Naive thymus-derived CD4-positive, alpha-beta T cell (primary cell): ENCODE measurements at regions of chr4 and their contacts with region 1.

Region 1: DNA sequence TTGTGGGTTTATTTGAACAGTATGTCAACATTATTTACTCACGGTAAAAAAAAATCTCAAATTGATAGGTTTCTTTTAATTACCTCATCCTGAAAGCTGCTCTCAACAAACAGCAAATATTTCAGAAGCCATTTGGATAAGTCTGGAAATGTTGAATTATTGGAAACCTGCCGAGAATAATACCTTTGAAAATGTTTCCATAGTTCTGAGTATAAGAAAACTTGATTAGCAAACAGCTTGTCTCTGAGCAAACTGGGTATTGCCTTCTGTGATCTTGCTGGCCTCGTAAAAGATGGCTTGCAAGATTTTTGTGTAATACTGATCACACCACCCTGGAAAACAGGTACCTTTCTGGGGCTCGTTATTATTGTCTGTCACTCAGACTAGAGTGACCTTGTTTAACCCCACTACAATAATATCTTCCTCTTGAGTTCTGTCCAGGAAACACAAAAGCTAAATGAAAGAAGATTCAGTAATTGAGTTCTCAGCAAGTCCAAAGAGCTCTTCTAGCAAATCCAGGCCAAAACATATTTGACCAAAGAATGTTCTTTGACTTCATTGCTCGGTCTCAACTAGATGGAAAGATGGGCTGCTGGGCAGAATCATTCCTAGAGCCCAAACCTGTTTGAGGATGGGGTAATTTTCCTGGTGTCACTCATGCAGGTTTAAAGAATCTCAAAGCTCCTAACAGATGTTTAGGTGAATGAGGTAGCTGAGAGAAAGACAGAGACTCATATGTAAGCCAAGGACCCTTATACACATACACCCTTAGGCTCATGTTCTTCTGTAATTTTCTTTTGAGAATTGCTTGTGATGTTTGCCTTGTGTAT is 255.6 kb upstream of the JADE1 start:
- DNase-seq: peak in 1 of 9 donors; percentile 4
- ATAC-seq: no peak
- H3K4me3 ChIP-seq: no peak overlapping the region
- H3K4me3 Mint-ChIP-seq: peak overlapping the region; percentile 89 to 99 (median 94)
- H3K27ac ChIP-seq: no peak overlapping the region
- H3K27ac Mint-ChIP-seq: peak overlapping the region in 6 of 9 donors; percentile 1 to 92 (median 88)
- H3K4me1 ChIP-seq: peaks cover 0 to 4% of the 10 kb centered on the region in 2 donors
- H3K4me1 Mint-ChIP-seq: peaks cover 12 to 22% (median 17%) of the 10 kb centered on the region in 7 donors
- H3K27me3 ChIP-seq: peaks cover 0 to 3% of the 10 kb centered on the region in 2 donors
- H3K27me3 Mint-ChIP-seq: peaks cover 6 to 31% (median 7%) of the 10 kb centered on the region in 5 donors

Region 2: DNA sequence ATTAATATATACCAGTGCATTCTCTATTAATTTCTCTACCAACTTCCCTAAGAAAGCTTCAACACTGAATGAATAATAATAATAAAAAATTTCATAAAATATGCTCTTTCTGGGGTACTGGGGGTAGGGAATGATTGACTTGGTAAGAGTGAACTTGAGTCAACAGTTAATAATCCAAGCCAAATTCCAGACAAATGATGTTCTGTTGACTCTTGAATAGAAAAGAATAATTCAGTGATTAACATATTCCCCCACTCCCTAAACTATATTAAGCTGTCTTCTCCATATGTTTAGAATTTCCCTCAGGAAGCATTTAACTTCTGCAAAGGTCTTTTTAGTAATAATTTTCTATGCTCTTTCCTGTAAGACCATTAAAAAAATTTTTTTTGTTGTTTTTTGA is 278.6 kb before region 1 on chr4:
- CTCF ChIA-PET with region 1: no interaction called
- POLR2A ChIA-PET with region 1: no interaction called
- intact Hi-C with region 1: no loop called
- DNase-seq: no peak
- ATAC-seq: no peak
- H3K4me3 ChIP-seq: no peak overlapping the region
- H3K4me3 Mint-ChIP-seq: no peak overlapping the region
- H3K27ac ChIP-seq: no peak overlapping the region
- H3K27ac Mint-ChIP-seq: peak overlapping the region in 3 of 9 donors; percentile 27 to 51 (median 33)
- H3K4me1 ChIP-seq: no peaks in the 10 kb centered on the region
- H3K4me1 Mint-ChIP-seq: peaks cover 5 to 36% (median 13%) of the 10 kb centered on the region in 7 donors
- H3K27me3 ChIP-seq: no peaks in the 10 kb centered on the region
- H3K27me3 Mint-ChIP-seq: no peaks in the 10 kb centered on the region

Region 3: DNA sequence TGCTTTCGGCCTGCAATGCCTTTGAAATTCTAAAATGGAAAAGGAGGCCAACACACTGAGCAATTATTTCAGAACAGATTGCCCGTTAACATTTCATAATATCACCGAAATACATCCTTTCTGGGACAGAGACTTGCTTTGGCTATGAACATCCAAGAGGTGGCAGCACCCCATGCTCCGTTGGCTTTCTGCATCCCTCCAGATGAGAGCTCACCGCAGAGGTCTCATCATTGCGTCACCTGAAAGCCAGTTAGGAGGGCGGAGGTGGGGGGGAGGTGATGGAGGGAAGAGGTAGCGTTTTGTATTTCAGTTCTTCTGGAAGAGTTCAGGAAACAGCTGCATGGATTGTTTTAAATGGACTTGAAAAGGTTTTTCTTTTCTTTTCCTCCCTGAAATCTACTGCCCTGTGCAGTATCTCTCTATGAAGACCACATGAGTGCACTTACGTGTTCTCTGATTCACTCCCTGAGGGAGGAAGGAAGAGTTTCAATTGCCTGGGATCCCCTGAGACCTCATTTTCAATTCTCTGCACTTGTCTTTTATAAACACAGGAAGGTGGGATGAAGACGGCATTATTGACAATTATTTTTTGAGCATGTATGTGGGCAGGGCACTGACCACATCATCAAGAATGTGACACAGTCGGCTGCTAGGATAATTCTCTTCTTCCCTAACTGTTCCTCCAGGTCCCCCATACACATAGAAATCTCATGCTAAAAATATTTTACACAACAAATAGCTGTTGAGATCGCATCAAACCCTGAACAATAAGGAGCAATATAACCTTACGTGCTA is 99.4 kb before region 1 on chr4:
- CTCF ChIA-PET with region 1: no interaction called
- POLR2A ChIA-PET with region 1: no interaction called
- intact Hi-C with region 1: loop called (anchors 1 to 2 kb)
- DNase-seq: peak; percentile 16 to 68 (median 49)
- ATAC-seq: peak; percentile 92
- H3K4me3 ChIP-seq: no peak overlapping the region
- H3K4me3 Mint-ChIP-seq: no peak overlapping the region
- H3K27ac ChIP-seq: no peak overlapping the region
- H3K27ac Mint-ChIP-seq: peak overlapping the region in 1 of 9 donors; percentile 47
- H3K4me1 ChIP-seq: no peaks in the 10 kb centered on the region
- H3K4me1 Mint-ChIP-seq: peaks cover 0 to 11% (median 0%) of the 10 kb centered on the region in 7 donors
- H3K27me3 ChIP-seq: no peaks in the 10 kb centered on the region
- H3K27me3 Mint-ChIP-seq: no peaks in the 10 kb centered on the region

Region 4: GRCh38 chr4:128502818-128503527 is 50.9 kb before region 1 on chr4:
- CTCF ChIA-PET with region 1: no interaction called
- POLR2A ChIA-PET with region 1: no interaction called
- intact Hi-C with region 1: no loop called
- DNase-seq: no peak
- ATAC-seq: no peak
- H3K4me3 ChIP-seq: no peak overlapping the region
- H3K4me3 Mint-ChIP-seq: no peak overlapping the region
- H3K27ac ChIP-seq: no peak overlapping the region
- H3K27ac Mint-ChIP-seq: no peak overlapping the region
- H3K4me1 ChIP-seq: no peaks in the 10 kb centered on the region
- H3K4me1 Mint-ChIP-seq: no peaks in the 10 kb centered on the region
- H3K27me3 ChIP-seq: no peaks in the 10 kb centered on the region
- H3K27me3 Mint-ChIP-seq: no peaks in the 10 kb centered on the region

Region 5: DNA sequence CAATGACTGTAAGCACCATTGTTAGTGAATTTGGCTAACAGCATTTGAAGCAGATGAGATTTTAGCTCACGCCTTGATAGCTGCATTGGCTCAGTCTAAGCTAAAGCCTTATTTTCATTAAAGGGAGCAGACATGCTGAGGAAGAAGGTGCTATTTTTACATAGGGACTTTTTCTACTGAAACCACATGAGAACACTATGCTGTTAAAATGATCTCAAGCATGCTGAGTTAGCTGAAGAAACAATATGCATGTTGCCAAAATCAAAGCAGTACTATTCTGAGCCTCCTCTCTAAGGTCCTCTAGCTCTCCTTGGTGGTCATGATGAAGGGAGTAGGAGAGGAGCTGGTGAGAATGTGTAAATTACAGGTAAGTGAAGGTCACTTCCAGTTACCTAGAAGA is 121.2 kb after region 1 on chr4:
- CTCF ChIA-PET with region 1: no interaction called
- POLR2A ChIA-PET with region 1: no interaction called
- intact Hi-C with region 1: no loop called
- DNase-seq: peak in 1 of 9 donors; percentile 16
- ATAC-seq: peak; percentile 48
- H3K4me3 ChIP-seq: no peak overlapping the region
- H3K4me3 Mint-ChIP-seq: peak overlapping the region in 2 of 10 donors; percentile 25 to 56
- H3K27ac ChIP-seq: no peak overlapping the region
- H3K27ac Mint-ChIP-seq: peak overlapping the region in 5 of 9 donors; percentile 2 to 76 (median 33)
- H3K4me1 ChIP-seq: no peaks in the 10 kb centered on the region
- H3K4me1 Mint-ChIP-seq: peaks cover 0 to 24% (median 6%) of the 10 kb centered on the region in 7 donors
- H3K27me3 ChIP-seq: no peaks in the 10 kb centered on the region
- H3K27me3 Mint-ChIP-seq: peaks cover 0 to 14% (median 4%) of the 10 kb centered on the region in 5 donors